Motor neuron (in vitro differentiated cells): ENCODE measurements at regions of chr9 and their contacts with region 1.

Region 1: GRCh38 chr9:105157130-105157583 is 87.3 kb upstream of the SLC44A1 start:
- ATAC-seq: peak; percentile 89 to 95 (median 92)
- H3K4me3 ChIP-seq: no peak overlapping the region
- H3K27ac ChIP-seq: no peak overlapping the region
- H3K4me1 ChIP-seq: peaks cover 3 to 12% of the 10 kb centered on the region in 2 donors

Region 2: DNA sequence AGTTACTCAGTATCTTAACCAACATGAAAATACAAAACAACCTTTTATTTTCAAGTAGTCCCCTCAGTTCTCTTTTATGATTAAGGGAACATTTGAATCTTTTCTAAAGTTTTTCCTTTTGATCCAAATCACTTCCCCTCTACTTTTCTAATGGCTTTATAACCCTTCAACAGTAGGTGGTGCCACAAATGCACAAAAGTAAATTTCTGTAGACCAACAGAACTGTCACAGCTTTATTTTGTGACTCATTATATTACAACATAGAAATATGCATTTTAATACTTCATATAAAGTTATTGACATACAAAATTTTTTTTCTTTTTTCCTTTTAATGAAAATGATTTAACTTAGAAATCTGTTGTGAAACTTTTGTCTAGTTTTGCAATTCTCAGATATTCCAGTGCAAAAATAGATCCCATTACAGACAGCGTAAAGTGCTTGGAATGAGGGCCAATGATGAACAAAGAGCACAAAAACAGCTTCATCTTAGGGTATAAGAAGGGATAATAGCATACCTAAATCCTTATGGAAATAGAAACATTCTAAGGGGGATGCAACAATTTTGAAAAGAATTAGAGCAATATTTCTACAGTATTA is 376.3 kb before region 1 on chr9:
- in situ Hi-C with region 1: loop called in 1 of 9 experiments (anchors 25 kb)
- ATAC-seq: peak in 1 of 8 experiments; percentile 58
- H3K4me3 ChIP-seq: no peak overlapping the region
- H3K27ac ChIP-seq: no peak overlapping the region
- H3K4me1 ChIP-seq: no peaks in the 10 kb centered on the region

Region 3: DNA sequence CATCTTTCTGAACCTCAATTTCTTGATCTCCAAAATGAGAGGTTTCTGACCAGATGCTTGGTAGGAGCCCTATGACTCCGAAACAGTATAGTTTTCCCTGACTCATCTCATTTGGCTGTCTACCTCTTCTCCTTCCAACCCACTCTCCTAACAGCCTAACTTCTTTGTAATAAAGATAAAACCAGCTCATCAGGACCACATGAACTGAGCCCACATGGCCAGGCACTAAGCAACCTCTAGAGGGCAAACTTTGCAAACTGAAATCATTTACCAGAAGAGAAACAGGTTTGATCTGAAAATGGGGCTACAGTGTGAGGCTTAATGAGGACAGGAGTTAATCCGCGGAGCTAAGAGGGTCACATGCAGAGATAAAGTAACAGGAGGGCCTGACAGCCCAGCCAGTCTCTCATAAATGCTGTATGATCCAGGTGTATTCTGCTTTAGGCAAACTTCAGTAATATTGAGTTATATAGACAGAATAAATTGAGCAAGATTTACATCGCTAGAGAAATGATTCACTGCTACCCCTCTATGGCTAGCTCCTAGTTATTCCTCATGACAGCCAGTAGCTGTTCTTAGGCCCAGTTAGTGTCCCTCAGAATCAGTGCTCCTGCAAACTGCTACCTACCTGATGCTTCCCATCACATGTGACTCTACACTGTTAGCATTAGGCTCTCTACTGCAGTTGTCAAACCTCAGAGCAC is 293.8 kb before region 1 on chr9:
- in situ Hi-C with region 1: loop called in 1 of 9 experiments (anchors 10 kb)
- ATAC-seq: peak; percentile 50 to 99 (median 90)
- H3K4me3 ChIP-seq: no peak overlapping the region
- H3K27ac ChIP-seq: no peak overlapping the region
- H3K4me1 ChIP-seq: peaks cover under 1 to 6% of the 10 kb centered on the region in 2 donors

Region 4: DNA sequence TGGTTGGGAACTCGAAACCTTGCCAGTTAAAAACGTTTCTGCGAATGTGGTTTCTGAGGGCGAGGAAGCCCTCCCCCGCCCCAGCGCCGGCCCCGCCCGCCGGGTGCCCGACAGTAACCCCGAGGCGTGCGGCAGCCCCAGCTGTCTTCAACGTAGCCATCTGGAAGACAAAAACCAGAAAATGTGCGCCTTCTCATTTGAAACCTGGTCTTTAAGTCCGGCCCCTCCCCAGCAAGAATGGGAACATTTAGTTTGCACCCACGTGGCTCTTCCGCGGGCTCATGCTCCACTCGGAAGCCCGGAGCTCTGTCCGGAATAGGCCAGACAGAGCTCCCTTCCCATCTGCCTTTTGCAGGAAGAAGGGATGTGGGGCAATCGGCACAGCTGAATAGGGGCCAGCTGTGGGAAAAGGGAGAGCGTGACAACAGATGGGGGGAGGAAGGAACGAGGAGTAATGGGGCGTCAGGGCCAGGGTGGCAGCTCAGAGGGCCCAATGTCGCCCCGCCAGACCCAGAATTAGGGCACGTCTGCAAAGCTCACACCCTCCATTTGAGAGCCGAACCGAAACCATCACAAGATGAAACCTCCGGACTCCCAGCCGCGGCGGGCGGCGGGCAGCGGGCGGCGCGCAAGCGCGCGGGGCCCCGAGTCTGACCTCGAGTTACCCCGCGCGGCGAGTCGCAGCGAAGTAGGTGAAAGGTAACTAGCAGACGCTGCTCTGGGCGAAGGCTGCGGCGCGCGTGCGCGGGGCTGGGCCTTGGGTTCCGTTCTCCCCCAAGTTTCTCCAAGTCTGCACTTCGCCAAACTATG is 165.8 kb before region 1 on chr9:
- in situ Hi-C with region 1: no loop called
- ATAC-seq: peak; percentile 55 to 81 (median 76)
- H3K4me3 ChIP-seq: peak overlapping the region; percentile 31 to 48 (median 35)
- H3K27ac ChIP-seq: peak overlapping the region; percentile 48 to 79
- H3K4me1 ChIP-seq: peaks cover 33 to 36% of the 10 kb centered on the region in 2 donors

Region 5: DNA sequence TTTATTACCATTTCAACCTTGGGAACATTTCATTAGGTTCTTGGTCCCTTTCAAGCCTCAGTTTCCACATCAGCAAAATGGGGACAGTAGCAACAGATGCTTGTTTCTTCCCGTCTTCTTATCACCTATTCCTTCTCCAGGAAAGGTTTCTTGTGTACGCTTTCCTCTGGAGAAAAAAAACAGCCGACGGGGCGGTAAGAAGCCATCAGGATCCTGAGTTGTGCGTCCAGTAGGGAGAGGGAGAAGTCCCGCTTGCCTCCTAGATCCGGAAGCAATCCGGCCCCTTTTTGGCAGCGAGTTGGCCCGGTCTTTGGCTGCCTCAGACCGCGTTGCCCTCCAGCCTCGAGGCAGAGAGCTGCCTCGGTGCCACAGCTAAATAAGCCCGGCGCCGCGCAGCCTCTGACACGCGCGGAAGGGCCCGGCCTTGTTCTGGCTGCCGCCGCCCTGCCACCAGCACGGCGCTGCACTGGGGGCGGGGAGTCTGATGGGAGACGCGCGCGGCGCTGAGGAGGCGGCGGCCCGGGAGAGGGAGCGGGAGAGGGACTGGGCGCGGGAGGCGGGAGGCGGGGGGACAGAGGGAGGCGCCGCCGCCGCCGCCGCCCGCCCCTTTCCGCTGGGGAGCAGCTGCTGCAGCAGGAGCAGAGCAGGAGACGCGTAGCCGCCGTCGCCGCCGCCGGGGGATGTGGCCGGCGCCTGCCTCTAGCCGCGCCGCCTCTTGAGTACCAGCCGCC is 87.0 kb after region 1 on chr9 and contains the start of gene SLC44A1:
- in situ Hi-C with region 1: no loop called
- ATAC-seq: peak; percentile 90 to 98 (median 97)
- H3K4me3 ChIP-seq: peak within 1 kb of the TSS; percentile 49 to 64 (median 62)
- H3K27ac ChIP-seq: peak within 1 kb of the TSS; percentile 70 to 74
- H3K4me1 ChIP-seq: peaks cover 0 to 18% of the 10 kb centered on the region in 2 donors
- total RNA-seq, gene SLC44A1: 7.3 to 166 (median 24.9) TPM

Region 6: DNA sequence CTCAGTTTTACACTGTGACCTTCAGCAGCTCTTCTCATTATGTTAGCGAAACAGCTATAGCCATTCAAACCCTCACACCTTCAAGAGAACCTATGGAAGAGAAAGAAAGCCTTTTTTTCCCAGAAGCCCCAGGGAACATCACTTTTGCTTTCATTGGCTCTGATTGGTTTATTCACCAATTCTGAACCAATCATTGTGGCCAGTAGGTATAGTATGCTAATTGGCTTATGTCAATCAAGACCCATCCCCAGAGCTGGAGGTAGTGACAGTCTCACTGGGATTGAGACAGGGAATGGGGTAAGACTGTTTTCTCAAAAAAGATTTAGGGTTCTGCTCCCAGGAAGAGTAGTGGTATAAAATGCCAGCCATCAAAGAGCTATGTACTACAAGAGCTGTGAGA is 216.6 kb after region 1 on chr9:
- in situ Hi-C with region 1: no loop called
- ATAC-seq: no peak
- H3K4me3 ChIP-seq: no peak overlapping the region
- H3K27ac ChIP-seq: no peak overlapping the region
- H3K4me1 ChIP-seq: no peaks in the 10 kb centered on the region